Activated B cell treated with CpG ODN at 0.5 μM for 24 hours (primary cell): ENCODE measurements at regions of chr11 and their contacts with region 1.

Region 1: DNA sequence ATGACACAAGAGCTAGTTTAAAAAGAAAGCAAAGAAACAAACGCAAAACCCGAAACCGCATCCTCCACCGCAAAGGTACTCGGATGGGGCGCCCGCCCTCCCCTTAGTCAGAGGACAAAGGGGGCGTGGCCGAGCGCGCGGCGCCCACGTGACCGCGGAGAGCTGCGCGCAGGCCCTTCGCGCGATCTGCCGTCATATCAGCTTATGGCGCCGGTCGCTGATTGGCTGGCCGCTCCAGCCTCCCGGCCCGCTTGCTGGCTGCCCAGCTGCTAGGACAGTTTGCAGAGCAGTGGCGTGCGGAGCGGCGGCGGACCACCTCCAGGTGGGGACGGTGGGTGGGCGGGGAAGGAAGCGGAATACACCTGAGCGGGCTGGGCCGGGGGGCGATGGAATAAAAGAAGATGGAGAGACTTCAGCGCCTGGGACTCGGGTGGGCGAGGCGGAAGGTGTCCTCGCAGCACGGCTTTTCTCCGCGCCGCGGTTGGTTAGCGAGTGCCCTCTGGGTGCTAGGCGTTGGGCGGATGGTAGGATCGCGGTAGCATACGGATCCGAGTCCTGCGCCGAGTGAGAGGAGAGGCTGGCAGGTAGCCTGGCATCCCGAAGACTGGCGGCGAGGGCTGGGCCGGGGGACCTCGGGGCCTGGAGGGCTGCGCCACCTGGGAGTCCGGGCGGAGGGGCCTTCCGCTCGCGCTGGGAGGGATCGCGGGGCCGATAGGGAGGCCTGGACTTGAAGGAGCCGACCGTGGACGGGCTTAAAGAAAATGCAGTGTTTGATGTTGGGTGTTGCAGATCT is at the start of gene SC5D:
- DNase-seq: peak; percentile 94
- ATAC-seq: peak; percentile 85
- H3K4me3 Mint-ChIP-seq: peak within 1 kb of the TSS; percentile 94
- H3K27ac Mint-ChIP-seq: peak within 1 kb of the TSS; percentile 97
- H3K4me1 Mint-ChIP-seq: peaks cover 50% of the 10 kb centered on the region
- H3K27me3 Mint-ChIP-seq: no peaks in the 10 kb centered on the region
- CTCF ChIP-seq: no peak
- total RNA-seq, gene SC5D: 35.2 and 40.4 TPM in 2 replicates

Region 2: GRCh38 chr11:120281143-120281795 is 1011.4 kb before region 1 on chr11:
- CTCF ChIA-PET with region 1: no interaction called
- POLR2A ChIA-PET with region 1: no interaction called
- intact Hi-C with region 1: no loop called
- DNase-seq: no peak
- ATAC-seq: no peak
- H3K4me3 Mint-ChIP-seq: no peak overlapping the region
- H3K27ac Mint-ChIP-seq: no peak overlapping the region
- H3K4me1 Mint-ChIP-seq: no peaks in the 10 kb centered on the region
- H3K27me3 Mint-ChIP-seq: peaks cover 13% of the 10 kb centered on the region
- CTCF ChIP-seq: no peak

Region 3: DNA sequence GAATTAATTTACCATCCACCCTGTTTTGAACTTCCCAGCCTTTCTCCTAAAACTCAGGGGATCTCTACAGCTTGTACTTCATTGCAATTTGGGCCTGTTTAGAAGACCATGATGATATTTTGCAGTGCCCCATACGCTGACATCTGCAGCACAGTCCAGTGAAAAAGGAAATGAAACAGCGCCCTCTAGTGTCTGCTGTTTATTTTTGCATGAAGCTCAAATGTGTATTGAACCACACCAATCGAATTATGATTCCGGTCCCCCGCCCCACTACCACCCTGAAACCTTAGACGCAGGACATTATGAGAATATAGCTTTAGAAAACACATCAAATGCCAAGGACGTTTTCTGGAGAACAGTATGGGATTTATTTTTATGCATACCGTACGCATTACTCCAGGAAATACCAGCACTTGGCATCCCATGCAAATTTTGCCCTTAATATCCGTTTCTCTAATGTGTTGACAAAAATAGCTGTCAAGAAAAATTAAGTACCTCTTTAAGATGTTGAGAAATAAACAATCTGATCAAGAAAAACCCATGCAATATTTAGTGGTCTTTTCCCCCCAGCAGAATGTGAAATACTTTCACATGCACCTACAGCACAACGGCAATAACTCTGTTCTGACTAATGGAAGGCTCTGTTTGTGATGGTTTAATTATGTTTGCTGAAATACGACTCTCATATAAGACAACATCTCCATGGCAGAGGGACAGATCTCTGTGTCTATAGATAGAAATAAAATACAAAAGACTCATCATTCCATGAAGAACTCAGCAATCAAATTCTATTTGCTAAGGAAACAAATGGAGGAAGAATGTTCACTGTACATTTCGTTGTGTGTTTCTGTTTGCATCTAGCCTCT is 97.7 kb before region 1 on chr11:
- CTCF ChIA-PET with region 1: no interaction called
- POLR2A ChIA-PET with region 1: no interaction called
- intact Hi-C with region 1: no loop called
- DNase-seq: no peak
- ATAC-seq: peak; percentile 52
- H3K4me3 Mint-ChIP-seq: no peak overlapping the region
- H3K27ac Mint-ChIP-seq: no peak overlapping the region
- H3K4me1 Mint-ChIP-seq: peaks cover 6% of the 10 kb centered on the region
- H3K27me3 Mint-ChIP-seq: peaks cover 25% of the 10 kb centered on the region
- CTCF ChIP-seq: no peak

Region 4: DNA sequence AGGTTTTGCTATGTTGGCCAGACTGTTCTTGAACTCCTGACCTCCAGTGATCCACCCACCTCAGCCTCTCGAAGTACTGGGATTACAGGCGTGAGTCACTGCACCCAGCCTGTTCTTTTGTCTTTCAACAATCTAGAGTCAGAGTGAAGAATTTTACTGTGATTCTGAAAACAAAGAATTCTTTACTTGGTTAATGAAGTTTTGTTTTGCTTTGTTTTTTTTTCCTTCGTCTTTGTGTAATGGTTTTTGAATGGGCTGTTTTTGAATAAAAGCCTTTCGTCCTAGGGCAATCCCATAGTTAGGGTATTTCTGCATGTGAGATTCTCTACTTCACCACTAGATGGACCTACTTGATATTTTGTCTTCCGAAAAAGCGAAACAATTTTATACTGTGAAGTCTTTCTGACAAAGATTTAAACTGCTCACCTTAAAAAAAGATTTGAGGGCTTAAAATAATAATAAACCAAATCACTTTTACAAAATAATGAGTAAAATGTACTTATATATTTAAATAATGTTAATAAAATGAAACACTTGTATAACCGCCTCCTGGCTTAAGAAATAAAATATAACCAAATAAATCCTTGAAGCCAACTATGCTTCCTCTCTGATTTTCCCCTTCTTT is 43.5 kb before region 1 on chr11:
- CTCF ChIA-PET with region 1: interaction called, 3 read pairs
- POLR2A ChIA-PET with region 1: interaction called, 4 read pairs
- intact Hi-C with region 1: loop called (anchors 1 kb)
- DNase-seq: no peak
- ATAC-seq: peak; percentile 73
- H3K4me3 Mint-ChIP-seq: no peak overlapping the region
- H3K27ac Mint-ChIP-seq: no peak overlapping the region
- H3K4me1 Mint-ChIP-seq: peaks cover 3% of the 10 kb centered on the region
- H3K27me3 Mint-ChIP-seq: peaks cover 4% of the 10 kb centered on the region
- CTCF ChIP-seq: peak; percentile 72

Region 5: DNA sequence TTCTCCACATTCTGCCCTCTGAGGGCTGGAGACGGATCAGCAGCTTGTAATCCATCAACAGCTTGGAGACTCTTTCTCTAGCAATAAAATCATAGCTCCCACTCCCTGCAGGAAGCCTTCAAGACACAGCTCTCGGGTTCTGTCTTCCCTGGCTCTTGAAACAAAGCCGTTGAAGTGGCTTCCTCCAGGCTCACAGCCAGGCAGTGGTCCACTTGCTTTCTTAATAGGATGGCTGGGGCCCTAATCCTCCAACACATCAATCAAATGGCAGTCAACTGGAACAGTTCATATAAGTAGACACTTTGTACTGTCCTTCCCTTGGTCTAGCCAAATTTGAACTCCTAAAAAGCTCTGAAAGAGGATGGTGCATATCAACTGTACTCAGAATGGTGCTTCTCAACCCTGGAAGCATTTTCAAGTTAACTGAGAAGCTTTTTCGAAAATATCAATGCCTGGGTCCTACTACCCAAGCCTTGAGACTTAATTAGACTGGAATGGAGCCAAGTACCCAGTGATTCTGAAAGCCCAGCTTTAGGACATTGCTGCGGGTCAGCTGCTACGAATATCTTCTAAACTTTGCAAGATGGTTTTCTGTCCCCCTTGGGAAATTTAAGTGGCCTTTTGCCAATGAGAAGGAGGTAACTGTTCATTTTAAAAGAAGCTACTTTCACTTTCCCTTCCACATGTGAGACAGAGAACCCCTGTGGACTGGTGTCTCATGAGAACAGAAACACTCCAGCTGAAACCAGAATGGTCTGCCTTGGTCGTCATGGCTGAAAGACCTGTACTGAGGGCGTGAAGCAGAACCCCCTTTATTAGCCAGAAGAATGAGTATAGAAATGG is 74.5 kb after region 1 on chr11:
- CTCF ChIA-PET with region 1: no interaction called
- POLR2A ChIA-PET with region 1: interaction called, 3 read pairs
- intact Hi-C with region 1: loop called (anchors 1 kb)
- DNase-seq: peak; percentile 22
- ATAC-seq: peak; percentile 98
- H3K4me3 Mint-ChIP-seq: peak overlapping the region; percentile 74
- H3K27ac Mint-ChIP-seq: peak overlapping the region; percentile 81
- H3K4me1 Mint-ChIP-seq: peaks cover 55% of the 10 kb centered on the region
- H3K27me3 Mint-ChIP-seq: no peaks in the 10 kb centered on the region
- CTCF ChIP-seq: no peak

Region 6: GRCh38 chr11:121514432-121515334 is 222.0 kb after region 1 on chr11:
- CTCF ChIA-PET with region 1: no interaction called
- POLR2A ChIA-PET with region 1: no interaction called
- intact Hi-C with region 1: no loop called
- DNase-seq: no peak
- ATAC-seq: no peak
- H3K4me3 Mint-ChIP-seq: no peak overlapping the region
- H3K27ac Mint-ChIP-seq: no peak overlapping the region
- H3K4me1 Mint-ChIP-seq: peaks cover 25% of the 10 kb centered on the region
- H3K27me3 Mint-ChIP-seq: no peaks in the 10 kb centered on the region
- CTCF ChIP-seq: no peak

Region 7: DNA sequence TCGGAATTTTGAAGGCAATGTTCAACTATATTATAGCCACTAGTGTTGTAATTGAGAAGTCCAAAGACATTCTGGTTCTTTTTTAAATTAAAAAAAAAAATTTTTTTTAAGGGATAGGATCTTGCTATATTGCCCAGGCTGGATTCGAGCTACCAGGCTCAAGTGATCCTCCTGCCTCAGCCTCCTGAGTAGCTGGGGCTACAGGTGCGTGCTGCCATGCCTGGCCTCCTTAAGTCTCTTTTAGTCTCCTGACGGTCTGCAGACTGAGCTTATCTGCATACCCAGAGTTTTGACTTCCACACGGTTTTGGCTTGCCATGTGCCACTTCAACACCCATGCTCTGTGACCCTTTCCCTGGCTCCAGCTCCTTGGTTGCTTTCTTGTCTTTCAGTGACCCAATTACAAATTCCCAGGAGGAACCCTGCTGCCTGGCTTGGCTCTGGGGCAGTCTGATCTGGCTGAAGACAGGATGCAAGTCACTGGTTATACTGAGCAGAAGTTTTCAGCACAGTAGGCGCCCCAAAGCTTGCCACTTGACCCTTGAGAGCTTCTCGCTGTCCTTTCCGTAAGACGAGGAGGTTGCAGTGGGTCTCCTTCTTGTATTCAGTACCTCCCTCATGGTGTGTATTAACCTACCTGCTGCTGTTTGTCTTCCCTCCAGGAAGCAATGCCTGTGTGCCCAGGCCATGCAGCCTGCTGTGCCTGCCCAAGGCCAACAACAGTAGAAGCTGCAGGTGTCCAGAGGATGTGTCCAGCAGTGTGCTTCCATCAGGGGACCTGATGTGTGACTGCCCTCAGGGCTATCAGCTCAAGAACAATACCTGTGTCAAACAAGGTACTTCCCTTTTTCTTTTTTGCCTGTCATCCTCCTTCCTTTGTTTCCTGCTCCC is 273.8 kb after region 1 on chr11:
- CTCF ChIA-PET with region 1: no interaction called
- POLR2A ChIA-PET with region 1: interaction called, 6 read pairs
- intact Hi-C with region 1: loop called (anchors 1 kb)
- DNase-seq: no peak
- ATAC-seq: no peak
- H3K4me3 Mint-ChIP-seq: no peak overlapping the region
- H3K27ac Mint-ChIP-seq: no peak overlapping the region
- H3K4me1 Mint-ChIP-seq: peaks cover 33% of the 10 kb centered on the region
- H3K27me3 Mint-ChIP-seq: peaks cover 2% of the 10 kb centered on the region
- CTCF ChIP-seq: no peak

Region 8: GRCh38 chr11:123062158-123062891 is 1769.6 kb after region 1 on chr11:
- CTCF ChIA-PET with region 1: no interaction called
- POLR2A ChIA-PET with region 1: interaction called, 6 read pairs
- intact Hi-C with region 1: loop called (anchors 1 kb)
- DNase-seq: peak; percentile 98
- ATAC-seq: peak; percentile 82
- H3K4me3 Mint-ChIP-seq: peak overlapping the region; percentile 97
- H3K27ac Mint-ChIP-seq: peak overlapping the region; percentile 100
- H3K4me1 Mint-ChIP-seq: peaks cover 69% of the 10 kb centered on the region
- H3K27me3 Mint-ChIP-seq: no peaks in the 10 kb centered on the region
- CTCF ChIP-seq: no peak